Ascending aorta (tissue), 2 donors: ENCODE measurements at regions of chr3 and their contacts with region 1.

Region 1: DNA sequence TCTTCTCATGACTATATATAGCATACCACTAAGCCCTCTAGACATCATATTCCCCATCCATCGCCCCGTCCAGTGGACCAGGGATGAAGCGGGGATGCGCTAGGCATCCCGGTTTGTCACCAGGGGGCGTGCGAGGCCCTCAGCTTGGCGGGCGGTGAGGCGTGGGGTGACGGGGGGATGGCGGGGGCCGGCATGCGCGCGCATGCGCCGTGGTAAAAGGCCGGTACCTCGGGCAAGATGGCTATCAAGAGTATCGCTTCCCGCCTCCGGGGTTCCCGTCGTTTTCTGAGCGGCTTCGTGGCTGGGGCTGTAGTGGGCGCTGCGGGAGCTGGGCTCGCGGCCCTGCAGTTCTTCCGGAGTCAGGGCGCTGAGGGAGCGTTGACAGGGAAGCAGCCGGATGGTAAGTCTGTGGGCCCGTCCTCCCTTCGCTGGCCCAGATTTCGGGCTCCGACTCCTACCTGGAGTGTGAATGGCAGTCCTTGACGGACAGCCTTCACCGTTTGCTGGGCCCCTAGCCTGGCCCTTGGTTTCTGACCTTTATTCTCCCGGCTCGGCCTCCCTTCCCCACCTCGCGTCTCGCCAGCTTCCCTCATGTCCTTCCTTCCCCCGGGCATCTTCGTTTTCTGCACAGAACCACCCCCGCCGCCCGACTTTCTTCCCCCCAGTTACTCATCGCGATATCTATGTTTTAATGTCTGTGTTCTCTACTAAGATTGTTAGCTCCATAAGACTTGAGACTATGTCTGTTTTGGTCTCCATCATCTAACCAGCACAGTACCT is at the start of gene EXOG:
- DNase-seq: peak; percentile 60 to 95
- H3K4me3 ChIP-seq: peak within 1 kb of the TSS; percentile 86 to 88
- H3K27ac ChIP-seq: peak within 1 kb of the TSS; percentile 75 to 79
- H3K4me1 ChIP-seq: peaks cover 0 to 4% of the 10 kb centered on the region in 2 donors
- H3K27me3 ChIP-seq: no peaks in the 10 kb centered on the region
- CTCF ChIP-seq: peak; percentile 72 to 91 (median 89)
- total RNA-seq, gene EXOG: 11.2 TPM

Region 2: GRCh38 chr3:38421679-38422336 is 74.5 kb before region 1 on chr3:
- intact Hi-C with region 1: no loop called
- DNase-seq: no peak
- H3K4me3 ChIP-seq: no peak overlapping the region
- H3K27ac ChIP-seq: no peak overlapping the region
- H3K4me1 ChIP-seq: no peaks in the 10 kb centered on the region
- H3K27me3 ChIP-seq: no peaks in the 10 kb centered on the region
- CTCF ChIP-seq: no peak

Region 3: DNA sequence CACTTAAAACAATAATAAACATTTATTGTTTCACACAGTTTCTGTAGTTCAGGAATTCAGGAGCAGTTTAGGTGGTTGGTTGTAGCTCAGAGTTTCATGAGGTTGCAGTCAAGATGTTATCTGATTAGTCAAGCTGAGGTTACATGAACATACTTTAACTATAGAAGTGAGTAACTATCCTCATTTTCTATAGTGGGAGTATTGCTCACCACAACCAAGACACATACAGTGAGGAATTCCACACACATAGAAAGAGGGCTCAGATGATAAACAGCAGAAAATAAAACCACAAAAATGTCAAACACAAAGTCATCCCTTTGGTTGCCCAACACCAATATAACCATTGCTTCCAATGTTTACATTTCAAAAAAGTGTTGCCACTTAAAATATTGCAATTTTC is 541.8 kb after region 1 on chr3:
- intact Hi-C with region 1: loop called (anchors 10 kb)
- DNase-seq: no peak
- H3K4me3 ChIP-seq: no peak overlapping the region
- H3K27ac ChIP-seq: no peak overlapping the region
- H3K4me1 ChIP-seq: no peaks in the 10 kb centered on the region
- H3K27me3 ChIP-seq: no peaks in the 10 kb centered on the region
- CTCF ChIP-seq: no peak